ENCODE measurements at regions of chr1 and their contacts with region 1.

Region 1: DNA sequence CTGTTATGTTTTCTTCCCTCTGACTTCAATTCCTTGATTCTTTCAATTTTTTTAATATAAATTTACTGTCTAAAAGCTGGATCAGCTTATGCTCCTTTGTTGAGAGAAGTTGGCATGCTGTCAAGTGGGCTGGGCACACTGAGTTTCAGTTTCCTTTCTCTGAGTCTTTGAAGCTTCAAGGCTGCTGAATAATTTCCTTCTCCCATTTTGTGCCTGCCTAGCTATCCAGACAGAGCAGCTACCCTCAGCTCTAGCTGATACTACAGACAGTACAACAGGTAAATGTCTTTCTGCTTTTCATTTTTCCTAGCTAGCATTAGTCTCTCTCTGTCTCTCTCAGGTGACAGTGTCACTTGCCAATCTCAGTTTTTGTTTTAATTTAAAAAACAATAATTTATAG is at the start of gene IFI44:
- DNase-seq: peak; percentile 91
- H3K4me3 Mint-ChIP-seq: peak within 1 kb of the TSS; percentile 95
- H3K27ac Mint-ChIP-seq: peak within 1 kb of the TSS; percentile 92
- H3K4me1 Mint-ChIP-seq: peaks cover 55% of the 10 kb centered on the region
- H3K27me3 Mint-ChIP-seq: no peaks in the 10 kb centered on the region
- total RNA-seq, gene IFI44: 20.4 and 27.6 TPM in 2 replicates

Region 2: GRCh38 chr1:78627321-78627720 is 22.3 kb before region 1 on chr1:
- intact Hi-C with region 1: loop called (anchors 1 kb)
- DNase-seq: no peak
- H3K4me3 Mint-ChIP-seq: peak overlapping the region; percentile 65
- H3K27ac Mint-ChIP-seq: peak overlapping the region; percentile 80
- H3K4me1 Mint-ChIP-seq: peaks cover 54% of the 10 kb centered on the region
- H3K27me3 Mint-ChIP-seq: no peaks in the 10 kb centered on the region

Region 3: GRCh38 chr1:78676347-78676982 is 26.8 kb after region 1 on chr1:
- intact Hi-C with region 1: loop called (anchors 2 kb)
- DNase-seq: peak; percentile 86
- H3K4me3 Mint-ChIP-seq: no peak overlapping the region
- H3K27ac Mint-ChIP-seq: no peak overlapping the region
- H3K4me1 Mint-ChIP-seq: peaks cover 22% of the 10 kb centered on the region
- H3K27me3 Mint-ChIP-seq: peaks cover 3% of the 10 kb centered on the region

Region 4: DNA sequence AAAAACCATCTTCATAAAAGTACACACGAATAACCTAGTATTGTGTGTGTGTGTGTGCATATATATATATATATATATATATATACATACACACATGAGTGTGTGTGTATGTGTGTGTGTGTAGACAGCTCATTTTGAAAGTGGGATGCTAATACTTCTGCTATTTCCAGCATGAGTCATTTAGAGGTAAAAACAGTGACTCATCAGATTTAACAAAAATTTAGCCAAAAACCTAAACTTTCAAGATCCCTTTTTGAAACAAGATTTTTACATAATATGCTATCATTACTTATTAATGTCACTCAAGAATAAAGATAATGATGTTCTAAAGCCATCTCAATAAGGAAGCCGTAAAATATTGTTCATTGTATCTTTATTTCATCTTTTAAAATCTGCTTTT is 392.5 kb after region 1 on chr1:
- intact Hi-C with region 1: loop called (anchors 10 kb)
- DNase-seq: no peak
- H3K4me3 Mint-ChIP-seq: no peak overlapping the region
- H3K27ac Mint-ChIP-seq: no peak overlapping the region
- H3K4me1 Mint-ChIP-seq: peaks cover 3% of the 10 kb centered on the region
- H3K27me3 Mint-ChIP-seq: no peaks in the 10 kb centered on the region

Measured in activated CD4-positive, alpha-beta T cell treated with anti-CD3 and anti-CD28 coated beads, Interleukin-2, amount 10 ng/mL, durations not matched to agents 24 days and 14 days (primary cell).